Heart right ventricle (tissue), 16 donors: ENCODE measurements at regions of chr1 and their contacts with region 1.

Region 1: GRCh38 chr1:119675349-119676345 is 27.6 kb upstream of the ZNF697 start:
- DNase-seq: peak; percentile 24 to 89
- ATAC-seq: peak; percentile 62 to 91 (median 84)
- H3K4me3 ChIP-seq: peak overlapping the region in 9 of 10 donors; percentile 28 to 55 (median 43)
- H3K27ac ChIP-seq: peak overlapping the region in 4 of 10 donors; percentile 0 to 30 (median 23)
- H3K4me1 ChIP-seq: peaks cover 0 to 24% (median 10%) of the 10 kb centered on the region in 9 donors
- H3K27me3 ChIP-seq: no peaks in the 10 kb centered on the region
- CTCF ChIP-seq: peak; percentile 79 to 95 (median 86)

Region 2: DNA sequence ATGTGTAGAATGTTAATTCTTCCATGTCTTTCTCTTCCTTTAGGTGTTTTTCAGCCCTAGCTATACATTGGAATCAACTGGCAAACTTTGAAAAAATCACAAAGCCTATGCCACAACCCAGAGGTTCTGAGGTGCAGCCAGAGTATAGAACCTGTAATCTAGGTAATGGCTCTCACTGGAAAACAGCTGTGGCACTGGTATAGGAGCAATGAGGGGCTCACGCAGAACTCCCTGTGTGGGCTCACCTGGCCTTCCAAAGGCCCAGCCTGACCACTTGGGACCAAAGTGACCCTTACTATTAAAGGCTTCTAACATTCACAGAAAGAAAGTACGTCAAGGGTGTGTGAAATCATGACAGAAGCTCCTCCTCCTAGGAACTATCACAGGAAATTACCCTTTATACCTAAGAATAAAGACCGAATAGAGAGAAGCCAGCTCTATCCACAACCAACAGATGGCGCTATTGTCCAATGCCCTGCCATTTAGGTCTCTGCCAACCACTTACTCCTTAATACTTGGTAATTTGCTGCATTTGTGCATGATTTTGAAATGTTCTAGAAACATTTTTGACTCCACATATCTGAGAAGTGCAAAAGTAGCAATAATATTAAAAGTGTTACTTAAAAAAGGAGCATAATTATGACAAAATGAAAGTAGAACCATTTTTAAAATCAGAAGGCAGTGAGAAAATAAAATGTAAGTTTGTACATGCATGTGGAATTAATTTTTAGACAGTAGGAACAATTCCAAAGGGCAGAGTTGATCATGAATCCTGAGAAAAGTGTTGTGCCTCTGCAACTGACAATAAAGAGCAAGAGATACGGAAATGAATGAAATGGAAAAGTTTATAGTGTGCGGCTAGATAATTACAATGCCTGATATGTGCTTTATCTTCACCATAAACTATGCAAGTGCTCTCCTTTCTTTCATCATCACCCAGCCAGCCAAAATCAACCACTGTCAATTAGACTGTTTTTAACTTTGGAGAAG is 400.2 kb before region 1 on chr1:
- intact Hi-C with region 1: loop called in 1 of 10 experiments (anchors 10 kb)
- DNase-seq: peak in 1 of 2 donors; percentile 29
- ATAC-seq: peak in 3 of 8 donors; percentile 52 to 61 (median 61)
- H3K4me3 ChIP-seq: no peak overlapping the region
- H3K27ac ChIP-seq: no peak overlapping the region
- H3K4me1 ChIP-seq: peaks cover 0 to 6% (median 0%) of the 10 kb centered on the region in 9 donors
- H3K27me3 ChIP-seq: no peaks in the 10 kb centered on the region
- CTCF ChIP-seq: peak in 8 of 9 donors; percentile 38 to 83 (median 68)

Region 3: GRCh38 chr1:119603695-119604094 is 72.0 kb before region 1 on chr1:
- intact Hi-C with region 1: no loop called
- DNase-seq: no peak
- ATAC-seq: no peak
- H3K4me3 ChIP-seq: no peak overlapping the region
- H3K27ac ChIP-seq: no peak overlapping the region
- H3K4me1 ChIP-seq: peaks cover 0 to 26% (median 0%) of the 10 kb centered on the region in 9 donors
- H3K27me3 ChIP-seq: no peaks in the 10 kb centered on the region
- CTCF ChIP-seq: no peak

Region 4: DNA sequence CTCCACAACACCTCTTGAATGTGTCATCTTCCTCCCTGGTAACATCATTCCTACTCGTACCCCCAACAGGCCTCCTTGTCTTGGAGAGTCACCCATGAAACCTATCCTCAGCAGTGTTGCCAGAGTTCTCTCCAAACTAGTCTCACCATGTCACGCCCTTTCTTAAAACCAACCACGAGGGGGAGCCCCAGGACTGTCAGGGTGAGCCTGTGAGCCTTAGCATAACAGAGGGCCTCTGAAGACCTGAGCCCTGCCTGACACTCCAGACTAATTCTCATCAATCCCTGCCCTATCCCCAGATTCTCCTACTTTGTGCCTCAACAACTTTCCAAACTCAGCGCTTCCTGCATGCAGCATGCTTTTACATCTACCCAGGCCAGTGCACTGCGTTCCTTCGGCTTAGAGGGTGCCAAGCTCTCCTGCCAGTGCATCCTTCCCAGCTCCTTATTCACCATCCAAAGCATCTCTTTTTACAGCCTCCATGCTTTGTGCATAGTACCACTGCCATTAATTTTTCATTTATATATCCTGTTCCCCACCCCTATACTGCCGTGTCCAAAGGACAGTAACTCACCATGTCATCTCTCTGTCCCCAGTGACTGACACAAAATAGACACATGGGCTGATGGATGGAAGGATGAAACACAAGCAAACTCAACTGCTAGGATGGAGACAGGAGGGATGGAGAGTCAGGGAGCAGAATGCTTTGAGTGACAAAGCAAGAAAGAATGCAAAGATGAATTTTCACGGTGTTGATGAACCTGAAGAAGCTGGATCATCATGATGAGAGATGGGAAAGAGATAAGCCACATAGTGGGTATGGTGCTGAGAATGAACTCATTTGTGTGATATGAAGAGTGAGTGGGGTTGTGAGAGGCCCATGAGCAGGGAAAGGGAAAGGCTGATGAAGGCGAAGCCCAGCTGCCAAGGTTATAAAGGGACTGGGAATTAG is 61.6 kb before region 1 on chr1:
- intact Hi-C with region 1: loop called in 4 of 10 experiments (anchors 1 to 5 kb)
- DNase-seq: peak; percentile 76 to 88
- ATAC-seq: peak; percentile 89 to 96 (median 92)
- H3K4me3 ChIP-seq: no peak overlapping the region
- H3K27ac ChIP-seq: no peak overlapping the region
- H3K4me1 ChIP-seq: peaks cover 4 to 41% (median 23%) of the 10 kb centered on the region in 9 donors
- H3K27me3 ChIP-seq: no peaks in the 10 kb centered on the region
- CTCF ChIP-seq: peak; percentile 74 to 96 (median 88)